Activated naive CD4-positive, alpha-beta T cell treated with anti-CD3 and anti-CD28 coated beads, Interleukin-2, amount 10 ng/mL, durations not matched to agents 7 days and 5 days (primary cell): ENCODE measurements at regions of chr2 and their contacts with region 1.

Region 1: DNA sequence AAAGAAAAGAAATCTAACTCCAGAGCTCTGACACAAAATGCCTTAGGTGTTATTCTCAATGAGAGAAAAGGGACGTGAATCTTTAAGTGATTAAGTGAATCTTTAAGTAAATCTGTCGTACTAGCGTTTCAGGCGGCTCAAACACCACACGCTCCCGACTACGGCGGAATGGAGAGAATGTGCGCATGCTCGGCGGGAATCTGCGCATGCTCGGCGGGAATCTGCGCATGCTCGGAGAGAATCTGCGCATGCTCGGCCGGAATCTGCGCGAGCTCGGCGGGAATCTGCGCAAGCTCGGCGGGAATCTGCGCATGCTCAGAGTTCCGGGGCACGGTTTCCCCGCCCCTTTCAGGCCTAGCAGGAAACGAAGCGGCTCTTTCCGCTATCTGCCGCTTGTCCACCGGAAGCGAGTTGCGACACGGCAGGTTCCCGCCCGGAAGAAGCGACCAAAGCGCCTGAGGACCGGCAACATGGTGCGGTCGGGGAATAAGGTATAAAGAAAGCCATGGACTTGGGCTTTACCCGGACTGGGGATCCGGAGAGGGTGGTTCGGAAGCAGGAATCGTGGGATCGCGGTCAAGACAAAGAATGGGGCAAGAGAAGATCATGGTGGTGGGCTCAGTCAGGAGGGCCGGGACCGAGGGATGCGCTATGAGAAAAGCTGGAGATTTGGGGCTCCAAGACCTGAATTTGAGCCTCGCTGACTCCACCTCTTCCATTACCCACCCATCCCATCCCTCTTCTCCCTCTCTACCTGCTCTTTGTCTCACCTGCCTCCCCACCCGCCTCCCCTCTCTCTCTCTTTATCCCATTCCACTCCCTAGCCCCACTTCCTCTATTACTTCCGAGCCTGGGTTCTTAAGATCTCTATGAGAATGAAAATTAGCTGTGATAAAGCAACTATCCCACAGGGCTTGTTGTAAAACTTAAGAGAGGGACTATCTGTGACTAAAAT is at the start of gene XRCC5:
- DNase-seq: peak; percentile 97
- H3K4me3 Mint-ChIP-seq: peak within 1 kb of the TSS; percentile 99
- H3K27ac Mint-ChIP-seq: peak within 1 kb of the TSS; percentile 97
- H3K4me1 Mint-ChIP-seq: peaks cover 56% of the 10 kb centered on the region
- H3K27me3 Mint-ChIP-seq: peaks cover 4% of the 10 kb centered on the region

Region 2: GRCh38 chr2:216081487-216082116 is 27.6 kb before region 1 on chr2 and contains the starts of genes PECR and TMEM169:
- CTCF ChIA-PET with region 1: interaction called, 45 read pairs
- DNase-seq: peak; percentile 87
- H3K4me3 Mint-ChIP-seq: peak within 1 kb of the TSS; percentile 97
- H3K27ac Mint-ChIP-seq: peak within 1 kb of the TSS; percentile 87
- H3K4me1 Mint-ChIP-seq: peaks cover 67% of the 10 kb centered on the region
- H3K27me3 Mint-ChIP-seq: no peaks in the 10 kb centered on the region

Region 3: DNA sequence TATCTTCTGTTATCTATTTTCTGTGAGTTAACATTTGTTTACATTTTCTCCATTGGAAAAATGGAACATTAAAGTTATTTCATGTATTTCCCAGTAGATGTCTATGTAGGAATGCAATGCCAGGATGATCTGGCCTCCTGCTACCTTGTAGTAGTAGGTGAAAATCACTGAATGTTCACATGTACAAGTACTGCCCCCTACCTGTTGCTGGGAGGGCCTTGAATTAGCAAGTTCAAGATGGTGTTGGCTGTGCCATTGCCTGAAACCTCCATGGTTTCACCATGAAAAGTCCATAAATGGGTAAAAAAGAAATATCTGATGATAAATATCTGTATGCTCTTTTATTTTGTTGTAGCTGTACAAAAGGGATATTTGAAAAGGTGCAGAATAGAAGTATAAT is 30.6 kb after region 1 on chr2:
- CTCF ChIA-PET with region 1: interaction called, 16 read pairs
- DNase-seq: peak; percentile 65
- H3K4me3 Mint-ChIP-seq: no peak overlapping the region
- H3K27ac Mint-ChIP-seq: no peak overlapping the region
- H3K4me1 Mint-ChIP-seq: peaks cover 27% of the 10 kb centered on the region
- H3K27me3 Mint-ChIP-seq: no peaks in the 10 kb centered on the region